Adrenal gland (tissue), 19 donors: ENCODE measurements at regions of chr10 and their contacts with region 1.

Region 1: GRCh38 chr10:74176380-74177139 is 25.5 kb downstream of the ADK start:
- DNase-seq: peak; percentile 94 to 99 (median 98)
- H3K4me3 ChIP-seq: peak overlapping the region; percentile 2 to 80 (median 60)
- H3K27ac ChIP-seq: peak overlapping the region; percentile 41 to 92 (median 87)
- H3K4me1 ChIP-seq: peaks cover 0 to 4% of the 10 kb centered on the region in 2 donors
- H3K27me3 ChIP-seq: no peaks in the 10 kb centered on the region
- CTCF ChIP-seq: no peak
- POLR2A ChIP-seq: peak; percentile 66 to 95

Region 2: DNA sequence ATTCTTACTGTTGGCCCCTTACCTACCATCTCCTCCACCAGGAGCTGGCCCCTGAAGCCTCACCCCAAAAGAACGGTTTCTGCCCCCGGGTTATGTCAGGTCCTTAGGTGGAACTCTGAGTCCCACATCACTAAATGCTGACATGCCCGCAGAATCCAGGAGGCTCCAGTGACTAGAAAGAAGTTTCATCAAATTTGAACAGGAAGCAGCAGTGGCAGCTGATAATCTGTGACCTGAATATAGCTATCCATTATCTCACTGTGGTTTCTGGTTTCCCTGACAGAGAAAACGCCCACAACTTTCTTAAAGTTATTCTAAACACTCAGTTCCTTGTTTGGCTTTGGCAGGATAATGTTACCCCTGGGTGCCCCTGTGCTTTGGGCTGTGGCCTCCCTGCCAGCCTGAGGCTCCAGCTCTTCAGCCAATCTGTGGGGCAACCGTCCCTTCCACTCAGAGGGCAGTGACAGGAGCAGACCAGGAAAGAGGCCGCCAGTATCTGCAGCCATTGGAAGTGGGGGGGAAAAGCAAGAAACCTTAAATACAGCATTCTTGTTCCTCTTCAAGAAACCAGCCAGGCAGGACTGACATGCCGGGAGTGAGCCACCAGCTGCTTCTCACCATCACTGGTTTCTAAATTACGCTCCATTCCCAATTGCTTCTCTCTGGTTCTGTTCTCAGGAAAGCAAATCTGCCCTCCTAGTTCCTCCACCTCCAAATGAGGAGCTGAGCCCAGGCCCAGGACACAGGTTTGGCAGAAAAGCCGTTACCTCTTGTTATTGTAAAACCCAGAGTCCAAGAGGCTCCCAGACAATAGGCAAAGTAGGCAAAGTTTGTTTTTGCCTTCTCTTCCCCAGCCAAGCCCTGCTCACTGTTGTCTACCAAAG is 219.8 kb before region 1 on chr10:
- intact Hi-C with region 1: no loop called
- DNase-seq: peak in 1 of 7 donors; percentile 50
- H3K4me3 ChIP-seq: no peak overlapping the region
- H3K27ac ChIP-seq: peak overlapping the region in 1 of 5 donors; percentile 29
- H3K4me1 ChIP-seq: peaks cover 0 to 13% of the 10 kb centered on the region in 2 donors
- H3K27me3 ChIP-seq: no peaks in the 10 kb centered on the region
- CTCF ChIP-seq: no peak
- POLR2A ChIP-seq: no peak

Region 3: DNA sequence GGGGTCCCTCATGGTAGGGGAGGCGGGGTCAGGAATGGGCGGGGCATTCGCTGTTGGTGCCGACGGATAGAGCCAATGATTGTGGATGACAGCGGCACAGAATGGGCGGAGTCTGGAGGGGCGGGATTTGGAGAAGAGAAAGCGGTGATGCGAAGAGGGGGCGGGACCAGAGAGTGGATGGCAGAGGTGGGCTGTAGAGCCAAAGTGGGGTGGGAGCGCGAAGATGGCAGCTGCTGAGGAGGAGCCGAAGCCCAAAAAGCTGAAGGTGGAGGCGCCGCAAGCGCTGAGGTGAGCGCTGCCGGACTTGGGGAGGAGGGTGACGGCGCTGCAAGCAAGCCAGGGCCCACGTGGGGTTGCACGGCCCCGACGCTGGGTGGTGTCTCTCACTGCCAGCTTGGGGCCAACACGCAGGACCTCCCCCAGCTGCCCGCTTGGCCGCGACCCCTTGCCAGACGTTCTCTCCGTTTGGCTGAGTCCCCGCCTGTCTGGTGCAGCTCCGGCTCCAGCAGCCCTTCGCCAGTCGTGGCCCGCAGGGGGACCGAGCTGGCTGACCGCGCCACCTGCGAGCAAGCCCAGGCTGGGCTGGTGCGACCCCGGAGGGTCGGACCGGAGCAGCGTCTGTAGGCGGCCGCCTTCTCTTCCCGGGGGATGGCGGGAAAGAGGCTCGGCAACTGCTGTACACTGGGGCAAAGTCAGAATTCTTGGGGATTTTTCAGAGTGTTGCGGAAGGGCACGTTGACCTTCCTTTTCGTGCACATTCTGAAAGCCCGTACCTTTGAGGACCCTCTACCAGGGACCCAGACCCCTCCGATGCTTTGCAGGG is 25.3 kb before region 1 on chr10 and contains the start of gene ADK:
- intact Hi-C with region 1: loop called in 1 of 2 experiments (anchors 2 kb)
- DNase-seq: peak; percentile 98 to 100 (median 100)
- H3K4me3 ChIP-seq: peak within 1 kb of the TSS; percentile 48 to 96 (median 82)
- H3K27ac ChIP-seq: peak within 1 kb of the TSS; percentile 79 to 92 (median 87)
- H3K4me1 ChIP-seq: peaks cover 15 to 33% of the 10 kb centered on the region in 2 donors
- H3K27me3 ChIP-seq: no peaks in the 10 kb centered on the region
- CTCF ChIP-seq: peak in 5 of 6 experiments; percentile 14 to 61 (median 32)
- POLR2A ChIP-seq: peak in 1 of 2 donors; percentile 71
- total RNA-seq, gene ADK: 18.4 to 29.1 (median 22.5) TPM